Right cardiac atrium (tissue), 5 donors: ENCODE measurements at regions of chr21 and their contacts with region 1.

Region 1: GRCh38 chr21:40466893-40467501 is 380.0 kb downstream of the DSCAM start:
- DNase-seq: no peak
- ATAC-seq: no peak
- H3K4me3 ChIP-seq: no peak overlapping the region
- H3K27ac ChIP-seq: no peak overlapping the region
- H3K4me1 ChIP-seq: no peaks in the 10 kb centered on the region
- H3K27me3 ChIP-seq: no peaks in the 10 kb centered on the region

Region 2: GRCh38 chr21:40841524-40842202 is 374.7 kb after region 1 on chr21:
- intact Hi-C with region 1: loop called in 2 of 4 experiments (anchors 5 to 10 kb)
- DNase-seq: peak; percentile 51 to 73 (median 72)
- ATAC-seq: peak; percentile 74 to 88
- H3K4me3 ChIP-seq: no peak overlapping the region
- H3K27ac ChIP-seq: no peak overlapping the region
- H3K4me1 ChIP-seq: no peaks in the 10 kb centered on the region
- H3K27me3 ChIP-seq: peaks cover 3% of the 10 kb centered on the region

Region 3: DNA sequence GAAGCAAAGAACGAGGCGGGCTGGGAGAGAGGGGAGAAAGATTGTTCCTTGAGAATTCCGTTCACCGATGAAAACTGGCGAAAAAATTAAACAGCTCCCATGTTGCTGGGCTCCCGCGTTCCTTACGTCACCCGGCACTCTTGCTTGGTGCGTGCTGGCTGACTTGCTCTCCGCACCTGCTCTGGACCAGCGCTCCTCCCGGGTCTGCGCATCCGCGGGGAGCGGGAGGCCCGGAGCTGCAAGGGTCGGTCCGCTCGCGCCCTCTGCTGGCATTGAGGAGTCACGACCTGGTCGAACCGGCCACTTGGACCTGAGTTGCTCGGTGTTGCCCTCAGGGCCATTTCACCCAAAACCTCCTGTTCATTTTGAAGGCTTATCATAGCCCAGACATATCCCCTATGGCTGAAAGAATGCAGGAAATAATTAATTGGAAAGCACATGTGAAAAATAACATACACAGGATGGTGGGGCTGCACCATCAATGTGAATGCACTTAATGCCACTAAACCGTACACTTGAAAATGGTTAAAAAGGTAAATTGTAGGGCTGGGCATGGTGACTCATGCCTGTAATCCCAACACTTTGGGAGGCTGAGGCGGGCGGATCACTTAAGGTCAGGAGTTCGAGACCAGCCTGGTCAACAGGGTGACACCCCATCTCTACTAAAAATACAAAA is 602.1 kb after region 1 on chr21:
- intact Hi-C with region 1: loop called (anchors 5 kb)
- DNase-seq: peak; percentile 84 to 93 (median 93)
- ATAC-seq: peak; percentile 88 to 91
- H3K4me3 ChIP-seq: peak overlapping the region; percentile 23
- H3K27ac ChIP-seq: no peak overlapping the region
- H3K4me1 ChIP-seq: no peaks in the 10 kb centered on the region
- H3K27me3 ChIP-seq: no peaks in the 10 kb centered on the region